PC-9 (cell line): ENCODE measurements at regions of chr1 and their contacts with region 1.

Region 1: DNA sequence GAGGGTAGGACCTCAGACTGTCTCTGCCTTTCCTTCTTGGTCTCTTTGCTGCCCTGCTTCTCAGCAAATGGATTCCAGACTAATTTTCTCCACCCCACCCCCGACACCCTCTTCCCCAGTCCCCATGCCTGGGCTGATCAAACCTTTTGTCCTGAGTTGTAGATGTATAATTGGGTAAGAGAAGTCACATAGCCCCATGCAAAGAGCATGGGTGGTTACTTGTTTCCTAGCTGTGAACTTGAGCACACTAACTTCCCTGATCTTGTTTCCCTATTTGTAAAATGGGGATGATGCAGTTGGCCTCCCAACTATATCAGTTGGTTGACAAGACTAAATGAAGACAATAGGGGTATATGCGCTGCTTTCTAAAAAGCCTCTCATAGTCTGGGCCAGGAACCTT is 9.2 kb downstream of the PADI6 start:
- DNase-seq: no peak
- H3K4me3 ChIP-seq: no peak overlapping the region
- H3K27ac ChIP-seq: no peak overlapping the region
- H3K4me1 ChIP-seq: peaks cover 13% of the 10 kb centered on the region
- H3K27me3 ChIP-seq: no peaks in the 10 kb centered on the region
- CTCF ChIP-seq: no peak

Region 2: GRCh38 chr1:17370618-17371017 is 10.5 kb before region 1 on chr1:
- CTCF ChIA-PET with region 1: interaction called, 11 read pairs
- POLR2A ChIA-PET with region 1: no interaction called
- intact Hi-C with region 1: no loop called
- DNase-seq: peak in 1 of 2 experiments; percentile 45
- H3K4me3 ChIP-seq: no peak overlapping the region
- H3K27ac ChIP-seq: no peak overlapping the region
- H3K4me1 ChIP-seq: peaks cover 32% of the 10 kb centered on the region
- H3K27me3 ChIP-seq: no peaks in the 10 kb centered on the region
- CTCF ChIP-seq: peak; percentile 67

Region 3: DNA sequence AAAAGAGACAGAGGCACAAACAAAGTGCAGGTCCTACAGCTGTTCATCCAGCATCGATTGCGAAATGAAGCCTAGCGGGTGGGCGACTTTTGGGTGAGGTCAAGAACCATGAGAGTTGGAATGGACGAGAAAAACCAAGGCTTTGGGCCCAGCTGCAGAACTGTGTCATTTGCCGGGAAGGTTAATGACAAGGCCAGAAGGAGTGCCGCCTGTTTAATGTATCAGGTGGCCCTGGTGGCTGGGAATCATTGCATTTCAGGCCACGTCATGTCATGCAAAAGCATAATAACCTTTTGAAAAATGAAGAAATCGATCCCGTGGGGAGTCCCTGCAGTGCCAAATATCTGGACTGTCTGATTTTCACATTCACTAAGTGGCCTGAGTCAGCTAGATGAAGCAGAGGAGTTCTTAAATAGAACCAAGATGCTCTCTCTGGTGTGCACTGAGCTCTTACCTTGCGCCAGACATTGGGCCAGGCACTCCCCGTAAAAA is 66.4 kb after region 1 on chr1:
- CTCF ChIA-PET with region 1: no interaction called
- POLR2A ChIA-PET with region 1: no interaction called
- intact Hi-C with region 1: no loop called
- DNase-seq: no peak
- H3K4me3 ChIP-seq: no peak overlapping the region
- H3K27ac ChIP-seq: no peak overlapping the region
- H3K4me1 ChIP-seq: peaks cover 8% of the 10 kb centered on the region
- H3K27me3 ChIP-seq: no peaks in the 10 kb centered on the region
- CTCF ChIP-seq: no peak

Region 4: GRCh38 chr1:18396247-18396980 is 1015.3 kb after region 1 on chr1:
- CTCF ChIA-PET with region 1: no interaction called
- POLR2A ChIA-PET with region 1: no interaction called
- intact Hi-C with region 1: no loop called
- DNase-seq: peak in 1 of 2 experiments; percentile 70
- H3K4me3 ChIP-seq: no peak overlapping the region
- H3K27ac ChIP-seq: no peak overlapping the region
- H3K4me1 ChIP-seq: peaks cover 17% of the 10 kb centered on the region
- H3K27me3 ChIP-seq: no peaks in the 10 kb centered on the region
- CTCF ChIP-seq: no peak